ENCODE measurements at regions of chr5 and their contacts with region 1.

Region 1: GRCh38 chr5:1344975-1345838 is at the start of gene CLPTM1L:
- DNase-seq: peak; percentile 75 to 97 (median 86)
- ATAC-seq: peak; percentile 96
- H3K4me3 ChIP-seq: peak within 1 kb of the TSS; percentile 86
- H3K4me3 Mint-ChIP-seq: peak within 1 kb of the TSS; percentile 96
- H3K27ac ChIP-seq: peak within 1 kb of the TSS; percentile 57 to 60
- H3K27ac Mint-ChIP-seq: peak within 1 kb of the TSS; percentile 91
- H3K4me1 ChIP-seq: peaks cover 38% of the 10 kb centered on the region
- H3K4me1 Mint-ChIP-seq: peaks cover 33% of the 10 kb centered on the region
- H3K27me3 ChIP-seq: no peaks in the 10 kb centered on the region
- H3K27me3 Mint-ChIP-seq: no peaks in the 10 kb centered on the region
- CTCF ChIP-seq: no peak
- total RNA-seq, gene CLPTM1L: 47.2 to 47.4 TPM

Region 2: DNA sequence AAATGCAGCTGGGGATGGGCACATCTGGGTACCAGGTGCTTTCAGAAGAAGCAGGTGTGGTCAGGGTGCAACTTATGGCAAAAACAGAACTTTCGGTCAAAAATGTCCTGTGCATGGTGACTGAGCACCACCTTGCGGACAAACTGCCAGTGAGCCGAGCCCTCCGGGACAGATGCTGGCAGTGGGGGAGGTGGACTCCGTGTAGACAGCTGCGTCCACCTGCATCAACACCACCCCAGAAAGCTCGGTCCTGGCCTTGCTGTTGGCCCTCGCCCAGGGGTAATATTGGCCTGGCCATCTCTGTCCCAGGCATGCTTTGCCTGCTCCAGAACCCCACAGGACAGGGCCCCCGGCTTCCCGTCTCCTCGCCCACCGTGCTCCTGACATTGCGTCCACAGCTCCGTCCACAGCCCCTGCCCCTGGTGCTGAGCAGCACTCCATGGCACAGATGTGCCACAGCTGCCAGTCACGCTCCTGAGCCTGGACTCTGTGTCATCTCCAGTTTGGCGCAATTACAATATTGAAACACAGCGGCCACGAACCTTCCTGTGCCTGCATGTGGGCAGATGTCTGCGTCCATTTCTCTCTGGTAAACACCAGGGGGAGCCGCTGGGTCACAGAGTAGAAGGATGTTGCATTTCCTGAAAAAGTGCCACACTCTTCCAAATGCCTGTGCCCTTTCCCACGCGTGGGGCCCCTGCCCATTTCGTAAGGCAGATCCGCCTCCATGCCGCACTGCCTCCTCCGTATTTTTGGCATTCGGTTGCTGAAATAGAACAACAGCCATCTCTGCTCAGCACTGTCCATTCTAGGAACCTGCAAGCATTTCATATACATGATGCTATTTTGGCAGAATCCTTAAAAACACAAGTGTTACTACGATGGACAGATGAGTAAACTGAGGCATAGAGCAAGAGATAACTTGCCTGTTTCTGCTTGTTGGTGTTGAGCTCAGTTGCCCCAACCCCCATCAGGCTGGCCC is 177.2 kb before region 1 on chr5:
- CTCF ChIA-PET with region 1: no interaction called
- POLR2A ChIA-PET with region 1: no interaction called
- intact Hi-C with region 1: loop called in 1 of 2 experiments (anchors 5 kb)
- DNase-seq: peak; percentile 52 to 85 (median 62)
- ATAC-seq: peak; percentile 88
- H3K4me3 ChIP-seq: peak overlapping the region; percentile 3
- H3K4me3 Mint-ChIP-seq: peak overlapping the region; percentile 62
- H3K27ac ChIP-seq: no peak overlapping the region
- H3K27ac Mint-ChIP-seq: no peak overlapping the region
- H3K4me1 ChIP-seq: peaks cover 13% of the 10 kb centered on the region
- H3K4me1 Mint-ChIP-seq: peaks cover 7% of the 10 kb centered on the region
- H3K27me3 ChIP-seq: peaks cover 0 to 10% of the 10 kb centered on the region in 2 experiments
- H3K27me3 Mint-ChIP-seq: peaks cover 4% of the 10 kb centered on the region
- CTCF ChIP-seq: peak; percentile 86

Region 3: GRCh38 chr5:1294835-1295649 is 50.2 kb before region 1 on chr5 and contains the start of gene TERT:
- CTCF ChIA-PET with region 1: no interaction called
- POLR2A ChIA-PET with region 1: interaction called, 6 read pairs
- intact Hi-C with region 1: loop called (anchors 1 to 10 kb)
- DNase-seq: peak; percentile 66 to 93 (median 79)
- ATAC-seq: peak; percentile 86
- H3K4me3 ChIP-seq: peak within 1 kb of the TSS; percentile 34
- H3K4me3 Mint-ChIP-seq: peak within 1 kb of the TSS; percentile 48
- H3K27ac ChIP-seq: no peak within 1 kb of the TSS
- H3K27ac Mint-ChIP-seq: no peak within 1 kb of the TSS
- H3K4me1 ChIP-seq: peaks cover 22% of the 10 kb centered on the region
- H3K4me1 Mint-ChIP-seq: peaks cover 4% of the 10 kb centered on the region
- H3K27me3 ChIP-seq: no peaks in the 10 kb centered on the region
- H3K27me3 Mint-ChIP-seq: no peaks in the 10 kb centered on the region
- CTCF ChIP-seq: no peak
- total RNA-seq, gene TERT: 0.55 to 0.84 TPM

Region 4: GRCh38 chr5:1363160-1363559 is 18.0 kb after region 1 on chr5:
- CTCF ChIA-PET with region 1: no interaction called
- POLR2A ChIA-PET with region 1: no interaction called
- intact Hi-C with region 1: no loop called
- DNase-seq: no peak
- ATAC-seq: no peak
- H3K4me3 ChIP-seq: no peak overlapping the region
- H3K4me3 Mint-ChIP-seq: no peak overlapping the region
- H3K27ac ChIP-seq: no peak overlapping the region
- H3K27ac Mint-ChIP-seq: no peak overlapping the region
- H3K4me1 ChIP-seq: no peaks in the 10 kb centered on the region
- H3K4me1 Mint-ChIP-seq: no peaks in the 10 kb centered on the region
- H3K27me3 ChIP-seq: peaks cover 7 to 21% of the 10 kb centered on the region in 2 experiments
- H3K27me3 Mint-ChIP-seq: peaks cover 16% of the 10 kb centered on the region
- CTCF ChIP-seq: no peak

Region 5: DNA sequence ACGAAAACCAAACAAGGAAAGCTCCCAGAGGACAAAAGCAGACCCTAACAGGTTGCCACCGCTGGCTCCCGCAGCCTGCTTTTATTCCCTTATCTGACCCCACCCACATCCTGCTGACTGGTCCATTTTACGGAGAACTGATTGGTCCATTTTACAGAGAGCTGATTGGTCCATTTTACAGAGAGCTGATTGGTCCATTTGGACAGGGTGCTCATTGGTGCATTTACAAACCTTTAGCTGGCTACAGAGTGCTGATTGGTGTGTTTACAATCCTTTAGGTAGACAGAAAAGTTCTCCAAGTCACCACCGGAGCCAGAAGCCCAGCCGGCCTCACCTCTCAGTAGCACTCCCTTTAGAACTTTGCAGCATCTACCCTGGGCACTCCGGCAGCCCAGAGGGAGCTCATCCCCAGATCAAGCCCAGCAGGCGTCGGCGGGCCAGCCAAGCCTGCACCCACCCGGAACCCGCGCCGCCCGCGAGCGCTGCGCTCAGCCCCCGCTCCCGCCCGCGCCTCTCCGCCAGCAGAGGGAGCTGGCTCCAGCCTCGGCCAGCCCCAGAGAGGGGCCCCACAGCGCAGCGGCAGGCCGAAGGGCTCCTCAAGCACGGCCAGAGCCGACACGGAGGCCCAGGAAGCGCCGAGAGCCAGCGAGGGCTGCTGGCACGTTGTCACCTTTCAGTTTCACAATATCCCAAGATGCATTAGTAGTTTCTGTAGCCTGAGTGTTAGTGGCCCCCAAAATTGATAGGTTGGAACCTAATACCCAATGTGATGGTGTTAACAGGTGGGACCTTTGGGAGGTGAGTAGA is 35.0 kb after region 1 on chr5:
- CTCF ChIA-PET with region 1: interaction called, 12 read pairs
- POLR2A ChIA-PET with region 1: interaction called, 38 read pairs
- intact Hi-C with region 1: loop called in 1 of 2 experiments (anchors 1 kb)
- DNase-seq: peak; percentile 19 to 76 (median 48)
- ATAC-seq: peak; percentile 89
- H3K4me3 ChIP-seq: peak overlapping the region; percentile 24
- H3K4me3 Mint-ChIP-seq: peak overlapping the region; percentile 75
- H3K27ac ChIP-seq: no peak overlapping the region
- H3K27ac Mint-ChIP-seq: peak overlapping the region; percentile 54
- H3K4me1 ChIP-seq: peaks cover 18% of the 10 kb centered on the region
- H3K4me1 Mint-ChIP-seq: peaks cover 9% of the 10 kb centered on the region
- H3K27me3 ChIP-seq: no peaks in the 10 kb centered on the region
- H3K27me3 Mint-ChIP-seq: no peaks in the 10 kb centered on the region
- CTCF ChIP-seq: peak; percentile 84

Region 6: DNA sequence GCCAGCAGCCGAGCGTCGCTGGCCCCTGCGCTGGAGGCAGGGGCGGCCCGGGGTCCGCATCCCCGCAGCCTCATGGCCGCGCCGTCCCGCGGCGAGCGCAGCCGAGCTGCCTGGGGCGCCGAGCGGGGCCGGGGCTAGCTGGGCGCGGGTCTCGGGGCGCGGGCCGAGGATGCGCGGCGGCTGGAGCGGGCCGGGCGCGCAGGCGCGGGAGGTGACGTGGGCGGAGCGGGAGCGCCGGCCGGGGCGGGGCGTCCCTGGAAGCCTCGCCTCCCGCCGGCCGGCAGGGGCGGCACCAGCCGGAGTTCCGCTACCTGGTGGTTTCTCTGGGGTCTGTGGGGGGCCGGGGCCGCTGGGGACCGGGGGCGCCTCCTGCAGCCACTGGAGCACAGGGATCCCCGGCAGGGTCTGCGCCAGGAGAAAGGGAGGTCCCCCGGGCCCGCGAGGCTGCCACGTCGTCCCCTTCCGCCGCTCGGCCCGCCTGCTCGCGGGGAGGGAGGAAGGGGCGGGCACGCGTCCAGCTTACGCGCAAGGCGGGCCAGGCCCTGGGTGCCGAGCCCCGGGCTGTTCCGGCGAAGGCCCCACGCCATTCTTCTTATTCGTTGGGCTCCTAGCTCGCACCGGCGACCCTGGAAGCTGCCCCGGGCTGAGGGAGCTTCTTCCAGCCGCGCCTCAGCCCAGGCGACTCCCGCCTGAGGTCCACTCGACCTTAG is 178.7 kb after region 1 on chr5 and contains the start of gene LPCAT1:
- CTCF ChIA-PET with region 1: no interaction called
- POLR2A ChIA-PET with region 1: interaction called, 4 read pairs
- intact Hi-C with region 1: loop called in 1 of 2 experiments (anchors 5 kb)
- DNase-seq: peak; percentile 38 to 89 (median 70)
- ATAC-seq: peak; percentile 90
- H3K4me3 ChIP-seq: peak within 1 kb of the TSS; percentile 56
- H3K4me3 Mint-ChIP-seq: peak within 1 kb of the TSS; percentile 90
- H3K27ac ChIP-seq: peak within 1 kb of the TSS; percentile 40 to 66
- H3K27ac Mint-ChIP-seq: peak within 1 kb of the TSS; percentile 79
- H3K4me1 ChIP-seq: peaks cover 37% of the 10 kb centered on the region
- H3K4me1 Mint-ChIP-seq: peaks cover 24% of the 10 kb centered on the region
- H3K27me3 ChIP-seq: no peaks in the 10 kb centered on the region
- H3K27me3 Mint-ChIP-seq: no peaks in the 10 kb centered on the region
- CTCF ChIP-seq: no peak
- total RNA-seq, gene LPCAT1: 20.4 to 21.2 TPM

Measured in CD4-positive, alpha-beta T cell (primary cell).